ENCODE measurements at regions of chr17 and their contacts with region 1.

Region 1: GRCh38 chr17:7136266-7136877 is 21.8 kb upstream of the ASGR2 start:
- DNase-seq: peak; percentile 36
- H3K4me3 ChIP-seq: no peak overlapping the region
- H3K27ac ChIP-seq: no peak overlapping the region
- H3K4me1 ChIP-seq: no peaks in the 10 kb centered on the region
- H3K27me3 ChIP-seq: no peaks in the 10 kb centered on the region
- CTCF ChIP-seq: peak; percentile 90 to 93

Region 2: GRCh38 chr17:6927290-6928126 is 208.9 kb before region 1 on chr17:
- CTCF ChIA-PET with region 1: interaction called, 10 read pairs
- dilution Hi-C with region 1: no loop called
- in situ Hi-C with region 1: no loop called
- intact Hi-C with region 1: no loop called
- DNase-seq: peak; percentile 44
- H3K4me3 ChIP-seq: no peak overlapping the region
- H3K27ac ChIP-seq: peak overlapping the region; percentile 11
- H3K4me1 ChIP-seq: no peaks in the 10 kb centered on the region
- H3K27me3 ChIP-seq: no peaks in the 10 kb centered on the region
- CTCF ChIP-seq: no peak

Region 3: GRCh38 chr17:7045909-7046724 is 90.3 kb before region 1 on chr17:
- CTCF ChIA-PET with region 1: interaction called, 28 read pairs
- dilution Hi-C with region 1: no loop called
- in situ Hi-C with region 1: loop called (anchors 5 kb)
- intact Hi-C with region 1: loop called (anchors 1 kb)
- DNase-seq: peak; percentile 84
- H3K4me3 ChIP-seq: peak overlapping the region; percentile 20 to 26 (median 22)
- H3K27ac ChIP-seq: peak overlapping the region; percentile 73
- H3K4me1 ChIP-seq: peaks cover 31% of the 10 kb centered on the region
- H3K27me3 ChIP-seq: peaks cover 9% of the 10 kb centered on the region
- CTCF ChIP-seq: peak; percentile 79 to 88

Region 4: DNA sequence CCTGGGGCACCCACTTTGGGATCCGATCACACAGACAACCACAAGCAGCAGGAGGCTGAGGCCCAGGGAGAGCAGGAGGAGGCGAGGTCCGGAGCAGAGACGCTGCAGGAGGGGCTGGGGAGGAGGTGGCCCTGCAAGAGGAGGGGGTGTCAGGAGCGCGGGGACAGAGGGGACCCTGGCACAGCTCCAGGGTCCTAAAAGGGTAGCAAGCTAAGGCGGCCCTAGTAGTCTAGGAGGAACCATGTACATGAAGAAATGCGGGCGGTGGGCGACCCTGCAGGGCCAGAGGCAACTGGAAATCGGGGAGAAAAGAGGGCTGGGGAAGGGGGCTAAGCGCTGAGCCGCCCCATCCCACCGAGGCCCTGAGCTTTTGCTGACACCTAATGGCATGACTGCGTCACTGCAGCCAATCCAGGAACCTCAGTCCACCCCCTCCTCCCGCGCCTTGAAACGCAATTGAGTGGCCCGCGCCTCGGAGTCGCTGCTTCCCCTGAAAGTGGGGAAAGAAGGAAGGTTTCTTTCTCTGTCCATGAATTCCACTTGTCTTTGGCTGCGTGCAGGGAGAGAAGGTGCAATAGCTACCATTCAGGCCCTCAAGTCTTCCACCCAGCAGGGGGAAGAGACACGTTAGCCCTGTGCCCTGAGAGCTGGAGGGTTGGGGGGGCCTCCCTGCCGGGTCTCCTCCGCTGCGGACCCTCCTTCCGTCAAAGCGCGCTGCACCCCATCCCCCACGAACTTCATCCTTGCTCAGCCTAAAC is 41.0 kb after region 1 on chr17:
- CTCF ChIA-PET with region 1: no interaction called
- dilution Hi-C with region 1: no loop called
- in situ Hi-C with region 1: no loop called
- intact Hi-C with region 1: loop called (anchors 2 kb)
- DNase-seq: peak; percentile 37
- H3K4me3 ChIP-seq: peak overlapping the region; percentile 15 to 35 (median 20)
- H3K27ac ChIP-seq: no peak overlapping the region
- H3K4me1 ChIP-seq: peaks cover 7% of the 10 kb centered on the region
- H3K27me3 ChIP-seq: peaks cover 3% of the 10 kb centered on the region
- CTCF ChIP-seq: peak; percentile 81 to 85